Activated CD8-positive, alpha-beta T cell treated with anti-CD3 and anti-CD28 coated beads, Interleukin-2, amount 10 ng/mL, durations not matched to agents 7 days and 5 days (primary cell): ENCODE measurements at regions of chr14 and their contacts with region 1.

Region 1: GRCh38 chr14:50762001-50762930 is 68.7 kb downstream of the NIN start:
- DNase-seq: no peak
- ATAC-seq: no peak
- H3K4me3 Mint-ChIP-seq: no peak overlapping the region
- H3K27ac Mint-ChIP-seq: peak overlapping the region; percentile 6
- H3K4me1 Mint-ChIP-seq: no peaks in the 10 kb centered on the region
- H3K27me3 Mint-ChIP-seq: no peaks in the 10 kb centered on the region

Region 2: DNA sequence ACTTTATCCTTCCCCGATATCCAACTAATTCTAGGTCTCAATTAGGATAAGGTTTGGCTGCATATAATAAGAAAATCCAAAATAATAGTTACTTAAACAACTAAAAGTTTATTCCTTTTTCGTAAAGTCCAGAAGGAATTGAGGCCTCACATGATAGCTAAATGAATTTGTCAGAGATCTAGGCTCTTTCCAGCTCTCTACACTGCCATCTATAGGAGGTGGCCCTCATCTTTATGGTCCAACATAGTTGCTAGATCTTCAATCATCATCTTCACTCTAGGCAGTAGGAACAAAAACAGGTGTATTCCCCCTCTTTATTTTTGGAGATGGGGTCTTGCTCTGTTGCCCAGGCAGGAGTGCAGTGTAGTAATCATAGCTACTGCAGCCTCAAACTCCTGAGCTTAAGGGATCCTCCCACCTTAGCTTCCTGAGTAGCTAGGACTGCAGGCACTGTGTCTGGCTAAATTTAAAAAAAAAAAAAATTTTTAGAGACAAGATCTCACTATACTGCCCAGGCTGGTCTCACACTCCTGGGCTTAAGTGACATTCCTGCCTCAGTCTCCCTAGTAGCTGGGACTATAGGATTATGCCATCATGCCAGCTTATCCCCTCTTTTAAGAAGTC is 47.7 kb before region 1 on chr14:
- CTCF ChIA-PET with region 1: interaction called, 12 read pairs
- POLR2A ChIA-PET with region 1: no interaction called
- DNase-seq: no peak
- ATAC-seq: peak; percentile 64
- H3K4me3 Mint-ChIP-seq: no peak overlapping the region
- H3K27ac Mint-ChIP-seq: no peak overlapping the region
- H3K4me1 Mint-ChIP-seq: no peaks in the 10 kb centered on the region
- H3K27me3 Mint-ChIP-seq: peaks cover 7% of the 10 kb centered on the region

Region 3: GRCh38 chr14:50823051-50823761 is 60.9 kb after region 1 on chr14:
- CTCF ChIA-PET with region 1: no interaction called
- POLR2A ChIA-PET with region 1: no interaction called
- DNase-seq: no peak
- ATAC-seq: peak; percentile 21
- H3K4me3 Mint-ChIP-seq: peak overlapping the region; percentile 73
- H3K27ac Mint-ChIP-seq: peak overlapping the region; percentile 94
- H3K4me1 Mint-ChIP-seq: peaks cover 89% of the 10 kb centered on the region
- H3K27me3 Mint-ChIP-seq: no peaks in the 10 kb centered on the region